Posterior vena cava (tissue), 2 donors: ENCODE measurements at regions of chr2 and their contacts with region 1.

Region 1: GRCh38 chr2:80461505-80462197 is 157.1 kb upstream of the LRRTM1 start:
- DNase-seq: no peak

Region 2: DNA sequence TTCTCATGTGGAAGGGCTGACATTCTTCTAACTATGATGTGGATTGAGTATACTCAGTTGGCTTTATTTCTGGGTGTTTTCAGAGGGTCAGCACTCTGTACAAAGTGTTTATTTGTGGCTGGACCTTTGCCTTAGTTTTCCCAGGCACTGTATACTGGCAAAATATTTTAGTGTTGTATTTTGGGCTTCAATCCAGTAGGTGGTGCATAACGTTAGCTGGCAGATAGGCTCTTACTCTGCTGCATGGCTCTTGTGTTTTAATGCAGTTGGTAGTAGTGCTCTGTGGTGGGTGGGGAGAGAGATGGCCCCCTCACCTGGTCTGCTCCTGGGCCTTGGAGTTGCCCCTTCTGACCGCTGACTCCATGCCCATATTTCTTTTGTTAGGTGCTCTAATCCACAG is 1226.5 kb before region 1 on chr2:
- intact Hi-C with region 1: loop called in 1 of 2 experiments (anchors 5 kb)
- DNase-seq: no peak

Region 3: GRCh38 chr2:80531319-80531718 is 69.7 kb after region 1 on chr2:
- intact Hi-C with region 1: no loop called
- DNase-seq: no peak